Activated B cell treated with CpG ODN at 0.5 μM for 24 hours (primary cell): ENCODE measurements at regions of chr1 and their contacts with region 1.

Region 1: DNA sequence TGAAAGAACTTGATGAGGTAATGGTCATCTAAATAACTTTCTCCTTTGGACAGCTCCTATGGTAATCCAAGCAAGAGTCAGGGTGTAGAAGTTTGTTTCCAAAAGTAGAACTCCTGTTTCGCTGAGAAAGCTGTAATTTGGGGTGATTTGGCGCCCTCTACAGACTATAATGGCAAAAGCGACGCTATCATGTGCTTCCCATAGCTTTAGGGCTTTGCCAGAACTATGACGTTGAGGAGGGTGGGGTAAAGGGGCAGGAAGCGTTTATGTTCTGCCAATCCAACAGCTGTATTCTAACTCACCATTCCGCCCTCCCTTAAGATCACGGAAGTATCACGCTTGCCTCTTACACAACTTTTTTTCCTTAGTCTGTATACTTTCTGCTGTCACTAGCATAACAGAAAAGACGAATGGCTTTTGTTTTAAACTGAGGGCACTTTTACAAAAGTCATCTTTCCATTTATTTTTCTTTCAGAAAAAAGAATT is at the start of gene FMO4:
- DNase-seq: peak; percentile 36
- ATAC-seq: peak; percentile 99
- H3K4me3 Mint-ChIP-seq: peak within 1 kb of the TSS; percentile 76
- H3K27ac Mint-ChIP-seq: peak within 1 kb of the TSS; percentile 88
- H3K4me1 Mint-ChIP-seq: peaks cover 21% of the 10 kb centered on the region
- H3K27me3 Mint-ChIP-seq: no peaks in the 10 kb centered on the region
- CTCF ChIP-seq: peak; percentile 22
- total RNA-seq, gene FMO4: 3.0 and 3.4 TPM in 2 replicates

Region 2: DNA sequence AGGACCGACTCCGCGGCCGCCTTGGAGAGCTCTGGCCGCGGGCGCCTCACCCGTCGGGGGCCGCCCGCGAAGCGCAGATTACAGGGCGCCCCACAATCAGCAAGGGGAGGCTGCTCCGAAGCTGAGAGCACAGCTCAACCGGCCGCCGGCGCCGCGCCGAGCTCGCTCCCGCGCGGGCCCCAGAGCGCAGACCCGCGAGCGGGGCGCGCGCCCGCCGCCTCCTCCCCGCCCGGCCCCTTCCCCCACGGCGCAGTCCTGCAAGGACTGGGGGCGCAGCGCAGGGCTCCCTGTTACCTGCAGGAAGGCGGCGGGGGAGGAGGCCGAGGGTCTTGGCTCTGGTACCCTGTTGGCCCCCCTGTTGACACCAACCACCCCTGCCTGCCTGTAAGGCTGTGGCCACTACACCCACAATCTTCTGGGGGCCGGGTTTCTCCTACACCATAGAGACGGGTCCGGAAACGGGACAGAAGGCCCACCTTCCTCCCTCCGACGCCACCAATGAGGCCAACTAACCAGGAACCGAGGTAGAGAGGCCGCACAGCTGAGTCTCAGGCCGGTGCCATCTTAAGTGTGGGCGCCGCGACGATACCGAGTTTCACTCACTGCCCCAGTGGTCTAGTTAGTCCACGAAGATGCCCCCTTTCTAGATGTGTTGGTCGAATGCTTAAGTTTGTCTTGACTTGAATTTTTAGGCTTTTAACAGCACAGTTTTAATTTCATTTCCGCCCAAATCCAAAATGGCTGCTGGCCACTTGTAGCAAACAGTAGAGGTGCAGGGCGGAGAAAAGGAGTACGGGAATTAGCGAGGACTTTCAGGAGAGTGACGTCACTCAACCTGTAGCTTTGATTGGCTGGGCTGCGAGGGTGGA is 1420.2 kb before region 1 on chr1 and contains the start of gene SCYL3:
- CTCF ChIA-PET with region 1: no interaction called
- POLR2A ChIA-PET with region 1: interaction called, 6 read pairs
- intact Hi-C with region 1: loop called (anchors 5 kb)
- DNase-seq: peak; percentile 82
- ATAC-seq: peak; percentile 87
- H3K4me3 Mint-ChIP-seq: peak within 1 kb of the TSS; percentile 88
- H3K27ac Mint-ChIP-seq: peak within 1 kb of the TSS; percentile 100
- H3K4me1 Mint-ChIP-seq: peaks cover 40% of the 10 kb centered on the region
- H3K27me3 Mint-ChIP-seq: peaks cover 4% of the 10 kb centered on the region
- CTCF ChIP-seq: no peak
- total RNA-seq, gene SCYL3: 14.5 and 16.2 TPM in 2 replicates

Region 3: GRCh38 chr1:170074250-170075157 is 1239.4 kb before region 1 on chr1 and contains the start of gene KIFAP3:
- CTCF ChIA-PET with region 1: interaction called, 3 read pairs
- POLR2A ChIA-PET with region 1: no interaction called
- intact Hi-C with region 1: loop called (anchors 1 kb)
- DNase-seq: peak; percentile 89
- ATAC-seq: peak; percentile 93
- H3K4me3 Mint-ChIP-seq: peak within 1 kb of the TSS; percentile 94
- H3K27ac Mint-ChIP-seq: peak within 1 kb of the TSS; percentile 87
- H3K4me1 Mint-ChIP-seq: peaks cover 52% of the 10 kb centered on the region
- H3K27me3 Mint-ChIP-seq: peaks cover 2% of the 10 kb centered on the region
- CTCF ChIP-seq: no peak
- total RNA-seq, gene KIFAP3: 11.8 and 12.7 TPM in 2 replicates

Region 4: DNA sequence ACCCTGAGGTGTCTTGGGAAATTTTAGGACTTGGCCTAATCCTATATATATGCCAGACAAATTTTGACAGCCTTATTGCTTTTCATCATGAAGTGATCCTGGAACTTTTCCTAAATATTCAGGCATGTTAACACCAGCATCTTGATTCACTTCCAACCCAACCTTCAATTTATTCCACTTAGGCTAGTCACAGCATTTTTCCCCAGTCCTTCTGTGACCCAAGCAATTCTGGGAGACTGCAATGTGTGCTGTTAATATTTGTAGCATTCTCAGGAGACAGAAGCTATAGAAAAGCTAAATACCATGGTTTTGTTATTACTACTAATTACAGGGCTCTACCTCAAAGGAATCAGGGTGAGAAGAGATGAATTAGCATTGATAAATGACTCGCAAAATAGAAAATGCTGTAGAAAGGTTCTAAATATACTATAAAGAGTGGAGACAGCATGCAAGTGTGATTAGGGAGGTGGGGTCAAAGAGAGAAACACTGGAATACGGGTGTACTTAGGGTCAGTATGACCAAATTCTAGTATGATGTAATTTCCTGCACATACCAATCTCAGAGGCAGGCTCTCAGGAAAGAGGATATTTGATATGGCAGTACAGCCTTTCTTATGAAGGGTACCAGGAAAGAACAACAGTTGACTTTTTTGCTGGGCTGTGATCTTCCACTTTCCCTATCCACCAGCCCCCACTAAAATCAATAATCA is 620.9 kb before region 1 on chr1:
- CTCF ChIA-PET with region 1: interaction called, 28 read pairs
- POLR2A ChIA-PET with region 1: no interaction called
- intact Hi-C with region 1: loop called (anchors 1 kb)
- DNase-seq: no peak
- ATAC-seq: no peak
- H3K4me3 Mint-ChIP-seq: no peak overlapping the region
- H3K27ac Mint-ChIP-seq: no peak overlapping the region
- H3K4me1 Mint-ChIP-seq: no peaks in the 10 kb centered on the region
- H3K27me3 Mint-ChIP-seq: peaks cover 14% of the 10 kb centered on the region
- CTCF ChIP-seq: no peak

Region 5: DNA sequence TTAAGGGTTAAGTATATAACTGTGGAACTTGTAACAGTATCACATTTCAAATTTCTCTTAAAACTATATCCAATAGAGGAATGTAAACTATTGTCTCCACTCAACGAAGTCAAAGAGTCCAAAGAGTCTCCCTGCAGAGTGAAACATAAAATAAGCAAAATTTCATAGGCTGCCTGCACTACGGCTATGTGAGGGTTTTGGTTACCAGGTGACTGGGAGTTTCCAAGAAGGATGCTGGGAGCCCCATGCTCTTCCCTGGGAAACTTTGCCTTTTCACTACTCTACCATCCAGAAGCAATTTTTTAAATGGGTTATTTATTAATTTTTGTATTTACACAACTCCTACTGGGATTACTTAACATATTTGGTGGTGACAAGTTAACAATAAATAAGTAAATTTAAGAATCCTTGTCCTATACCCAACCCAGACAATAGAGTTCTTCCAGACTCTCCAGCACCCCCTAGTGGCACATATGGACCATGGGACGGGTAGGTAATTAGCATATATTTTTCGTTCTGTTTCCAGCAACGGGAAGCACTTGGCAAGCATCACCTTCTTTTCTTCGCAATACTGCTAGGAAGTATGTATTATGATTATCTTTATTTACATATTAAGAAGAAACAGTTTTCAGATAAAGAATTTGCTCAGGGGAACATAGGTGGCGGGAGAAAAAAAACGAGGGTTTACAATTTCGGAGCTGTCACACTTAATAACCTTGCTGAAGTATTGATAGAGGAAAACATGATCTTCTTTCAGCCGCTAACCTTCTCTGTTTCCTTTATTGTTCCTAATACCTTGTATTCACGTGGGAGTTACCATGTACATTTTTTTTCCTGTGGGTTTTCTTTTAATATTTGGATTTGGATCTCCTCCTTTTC is 125.3 kb before region 1 on chr1:
- CTCF ChIA-PET with region 1: interaction called, 5 read pairs
- POLR2A ChIA-PET with region 1: interaction called, 3 read pairs
- intact Hi-C with region 1: loop called (anchors 1 kb)
- DNase-seq: no peak
- ATAC-seq: no peak
- H3K4me3 Mint-ChIP-seq: no peak overlapping the region
- H3K27ac Mint-ChIP-seq: no peak overlapping the region
- H3K4me1 Mint-ChIP-seq: no peaks in the 10 kb centered on the region
- H3K27me3 Mint-ChIP-seq: peaks cover 7% of the 10 kb centered on the region
- CTCF ChIP-seq: peak; percentile 30

Region 6: GRCh38 chr1:171267391-171267790 is 46.5 kb before region 1 on chr1:
- CTCF ChIA-PET with region 1: no interaction called
- POLR2A ChIA-PET with region 1: no interaction called
- intact Hi-C with region 1: no loop called
- DNase-seq: no peak
- ATAC-seq: no peak
- H3K4me3 Mint-ChIP-seq: no peak overlapping the region
- H3K27ac Mint-ChIP-seq: no peak overlapping the region
- H3K4me1 Mint-ChIP-seq: no peaks in the 10 kb centered on the region
- H3K27me3 Mint-ChIP-seq: peaks cover 15% of the 10 kb centered on the region
- CTCF ChIP-seq: no peak

Region 7: DNA sequence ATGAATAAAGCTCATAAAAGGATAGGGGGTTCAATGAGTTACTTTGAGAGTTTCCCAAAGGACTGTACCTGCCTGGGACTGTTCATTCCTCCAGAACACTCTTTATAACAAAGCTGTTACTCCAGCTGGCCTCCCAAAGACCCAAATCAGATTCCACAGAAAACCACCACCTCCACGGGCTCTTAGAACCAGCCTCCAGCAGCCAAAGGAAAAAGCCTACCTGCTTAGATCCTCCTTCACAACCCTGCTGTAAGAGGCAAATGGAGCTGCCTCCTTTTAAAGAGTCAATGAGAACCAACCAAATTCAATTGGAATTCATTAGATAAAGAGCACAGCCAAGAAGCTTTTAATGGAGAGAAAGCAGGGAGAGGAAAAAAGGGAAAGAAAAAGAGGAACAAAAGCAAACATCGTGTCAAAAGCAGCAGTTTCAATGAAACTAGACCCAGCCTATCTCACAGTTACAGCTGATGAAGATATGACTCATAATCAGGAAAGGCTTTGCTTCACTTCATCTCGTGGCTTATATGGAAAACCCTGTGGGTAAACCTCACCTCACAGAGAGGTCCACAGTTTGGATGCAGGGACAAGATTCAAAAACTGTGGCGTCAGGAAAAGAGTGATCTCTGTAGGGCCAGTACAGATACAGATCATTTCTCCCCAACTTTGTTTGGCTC is 27.7 kb before region 1 on chr1:
- CTCF ChIA-PET with region 1: interaction called, 15 read pairs
- POLR2A ChIA-PET with region 1: no interaction called
- intact Hi-C with region 1: no loop called
- DNase-seq: no peak
- ATAC-seq: peak; percentile 66
- H3K4me3 Mint-ChIP-seq: no peak overlapping the region
- H3K27ac Mint-ChIP-seq: peak overlapping the region; percentile 19
- H3K4me1 Mint-ChIP-seq: peaks cover 33% of the 10 kb centered on the region
- H3K27me3 Mint-ChIP-seq: peaks cover 2% of the 10 kb centered on the region
- CTCF ChIP-seq: no peak

Region 8: GRCh38 chr1:171366099-171366498 is 52.2 kb after region 1 on chr1:
- CTCF ChIA-PET with region 1: no interaction called
- POLR2A ChIA-PET with region 1: no interaction called
- intact Hi-C with region 1: no loop called
- DNase-seq: no peak
- ATAC-seq: no peak
- H3K4me3 Mint-ChIP-seq: no peak overlapping the region
- H3K27ac Mint-ChIP-seq: no peak overlapping the region
- H3K4me1 Mint-ChIP-seq: no peaks in the 10 kb centered on the region
- H3K27me3 Mint-ChIP-seq: peaks cover 22% of the 10 kb centered on the region
- CTCF ChIP-seq: no peak